Uterus (tissue), 4 donors: ENCODE measurements at regions of chr6 and their contacts with region 1.

Region 1: DNA sequence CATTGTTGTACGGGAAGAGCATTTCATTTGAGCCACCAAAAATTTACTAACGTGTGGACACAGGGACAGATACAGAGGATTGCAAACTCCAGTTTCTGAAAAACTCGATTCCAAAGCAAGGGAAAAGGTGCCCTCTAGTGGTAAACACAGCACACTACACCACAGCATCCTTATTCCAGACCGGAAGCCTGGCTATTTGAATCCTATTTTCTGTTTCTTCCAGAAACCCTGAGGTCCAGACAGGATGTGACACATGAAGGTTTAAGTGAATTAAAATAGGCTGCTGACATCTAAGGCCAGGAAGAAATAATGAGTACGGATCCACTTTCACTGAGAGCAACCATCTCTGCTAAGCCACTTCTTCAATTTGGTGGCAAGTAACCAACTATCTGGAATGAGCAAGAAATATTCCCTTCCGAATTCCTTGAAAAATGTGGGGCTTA is 31.8 kb upstream of the GMPR start:
- DNase-seq: peak; percentile 58 to 79
- H3K4me3 ChIP-seq: no peak overlapping the region
- H3K27ac ChIP-seq: peak overlapping the region in 1 of 2 donors; percentile 45
- H3K4me1 ChIP-seq: peaks cover 0 to 3% of the 10 kb centered on the region in 2 donors
- H3K27me3 ChIP-seq: no peaks in the 10 kb centered on the region
- CTCF ChIP-seq: peak; percentile 91 to 96 (median 94)
- POLR2A ChIP-seq: no peak

Region 2: DNA sequence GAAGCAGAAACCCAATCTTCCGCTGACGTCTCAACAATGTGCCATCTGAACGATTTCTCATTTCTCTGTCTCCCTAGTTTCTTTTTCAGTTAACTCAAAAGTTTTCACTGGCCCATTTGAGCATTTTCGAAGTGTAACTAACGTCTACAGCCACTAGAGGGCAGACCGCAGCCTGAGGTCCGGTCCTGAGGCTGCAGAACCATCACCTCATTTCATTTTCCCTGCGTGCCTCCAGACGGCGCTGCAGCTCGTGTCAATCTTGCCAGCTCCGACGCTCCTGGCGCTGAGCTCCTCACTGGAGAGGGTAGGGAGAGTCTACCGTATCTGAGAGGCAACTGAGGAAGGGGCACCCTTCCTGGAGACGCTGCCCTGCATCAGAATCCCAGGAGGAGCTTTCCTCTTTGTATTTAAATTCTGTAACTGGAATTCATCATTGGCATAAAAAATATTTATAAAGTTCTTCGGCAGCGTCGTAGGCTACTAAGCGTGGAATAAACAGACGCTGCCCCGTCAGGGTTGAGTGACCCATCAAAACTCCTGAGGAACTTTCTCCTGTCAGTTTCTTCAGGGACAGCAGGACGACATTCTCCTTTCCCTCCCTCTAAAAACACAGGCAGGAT is 515.3 kb before region 1 on chr6:
- intact Hi-C with region 1: loop called (anchors 5 kb)
- DNase-seq: peak; percentile 85 to 86
- H3K4me3 ChIP-seq: peak overlapping the region; percentile 38 to 43
- H3K27ac ChIP-seq: peak overlapping the region; percentile 38 to 73
- H3K4me1 ChIP-seq: no peaks in the 10 kb centered on the region
- H3K27me3 ChIP-seq: no peaks in the 10 kb centered on the region
- CTCF ChIP-seq: peak; percentile 99 to 100 (median 100)
- POLR2A ChIP-seq: peak in 1 of 2 donors; percentile 12

Region 3: GRCh38 chr6:16089232-16090062 is 117.2 kb before region 1 on chr6:
- intact Hi-C with region 1: no loop called
- DNase-seq: no peak
- H3K4me3 ChIP-seq: no peak overlapping the region
- H3K27ac ChIP-seq: no peak overlapping the region
- H3K4me1 ChIP-seq: no peaks in the 10 kb centered on the region
- H3K27me3 ChIP-seq: no peaks in the 10 kb centered on the region
- CTCF ChIP-seq: no peak
- POLR2A ChIP-seq: no peak